Endothelial cell of umbilical vein (primary cell): ENCODE measurements at regions of chr9 and their contacts with region 1.

Region 1: GRCh38 chr9:116060641-116061040 is 93.0 kb upstream of the PAPPA start:
- DNase-seq: no peak
- H3K4me3 ChIP-seq: no peak overlapping the region
- H3K27ac ChIP-seq: no peak overlapping the region
- H3K4me1 ChIP-seq: no peaks in the 10 kb centered on the region
- H3K27me3 ChIP-seq: no peaks in the 10 kb centered on the region
- CTCF ChIP-seq: no peak
- POLR2A ChIP-seq: no peak

Region 2: DNA sequence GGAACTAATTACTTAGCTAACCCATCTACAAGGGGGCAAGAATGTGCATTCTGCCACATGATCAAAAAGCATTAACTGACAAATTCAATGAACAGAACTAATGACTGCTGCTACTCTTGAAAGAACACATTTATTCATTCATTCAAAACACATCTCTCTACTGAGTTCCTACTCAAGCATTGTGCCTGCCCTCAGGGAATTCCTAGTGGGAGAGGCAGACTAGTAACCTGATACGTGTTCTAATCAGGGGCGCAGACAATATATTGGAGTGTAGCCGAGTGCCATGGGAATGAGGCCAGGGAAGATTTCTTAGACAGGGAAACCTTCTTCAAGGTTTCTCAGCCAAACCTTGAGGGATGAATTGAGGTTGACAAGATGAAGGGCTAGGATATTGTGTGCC is 36.2 kb after region 1 on chr9:
- CTCF ChIA-PET with region 1: no interaction called
- POLR2A ChIA-PET with region 1: no interaction called
- dilution Hi-C with region 1: no loop called
- intact Hi-C with region 1: loop called (anchors 1 kb)
- DNase-seq: no peak
- H3K4me3 ChIP-seq: no peak overlapping the region
- H3K27ac ChIP-seq: no peak overlapping the region
- H3K4me1 ChIP-seq: no peaks in the 10 kb centered on the region
- H3K27me3 ChIP-seq: no peaks in the 10 kb centered on the region
- CTCF ChIP-seq: no peak
- POLR2A ChIP-seq: no peak